ENCODE measurements at regions of chr5 and their contacts with region 1.

Region 1: DNA sequence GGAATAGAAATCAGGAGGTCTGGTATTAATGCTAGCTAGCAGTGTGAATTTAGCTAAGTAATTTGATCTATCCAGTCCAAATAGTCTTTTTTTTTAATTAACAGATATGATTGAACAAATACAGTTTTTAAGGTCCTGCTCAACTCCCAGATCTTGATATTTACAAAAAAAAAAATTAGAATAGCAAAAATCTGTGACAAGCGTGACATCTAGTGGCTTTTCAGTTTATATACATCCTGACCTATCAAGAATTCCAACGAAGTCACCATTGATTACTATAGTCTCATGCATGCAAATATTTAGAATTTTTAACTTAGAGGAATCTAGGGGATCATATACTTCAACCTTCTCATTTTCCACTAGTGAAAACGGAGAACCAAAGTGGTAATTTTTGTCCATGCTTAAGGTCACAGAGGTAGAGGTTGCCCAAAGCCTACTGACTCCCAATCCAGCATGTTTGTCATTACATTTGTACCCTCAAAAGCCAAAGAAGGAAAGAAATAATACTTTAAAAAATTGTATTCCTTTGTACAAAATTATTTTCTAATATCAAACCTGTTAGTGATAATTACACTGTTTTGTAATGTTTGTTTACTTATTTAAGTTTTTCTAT is 17.6 kb upstream of the TARS1 start:
- DNase-seq: peak; percentile 66
- H3K4me3 ChIP-seq: no peak overlapping the region
- H3K27ac ChIP-seq: no peak overlapping the region
- H3K4me1 ChIP-seq: no peaks in the 10 kb centered on the region
- H3K27me3 ChIP-seq: peaks cover 0 to 2% of the 10 kb centered on the region in 2 experiments
- CTCF ChIP-seq: peak; percentile 11 to 17
- POLR2A ChIP-seq: no peak

Region 2: DNA sequence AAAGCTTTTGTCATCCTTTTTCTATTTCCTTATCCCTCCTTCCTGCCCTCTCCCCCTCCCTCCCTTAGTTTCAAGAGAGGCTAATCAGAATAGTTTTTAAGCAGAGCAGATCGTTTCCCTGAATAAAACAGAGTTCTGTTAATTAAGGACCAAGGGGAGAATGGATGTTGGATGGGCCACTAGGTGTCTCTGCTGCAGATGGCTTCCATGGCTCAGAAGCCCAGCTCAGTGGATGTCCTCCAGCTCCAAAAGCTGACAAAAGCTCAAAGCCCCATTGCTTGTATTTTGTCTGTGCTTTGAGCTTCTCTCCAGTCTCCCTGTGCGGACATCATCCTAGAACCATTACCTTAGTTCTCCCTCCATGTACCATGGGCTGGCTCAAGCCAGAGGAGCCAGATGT is 733.0 kb before region 1 on chr5:
- CTCF ChIA-PET with region 1: interaction called, 14 read pairs
- POLR2A ChIA-PET with region 1: no interaction called
- dilution Hi-C with region 1: no loop called
- intact Hi-C with region 1: loop called (anchors 5 kb)
- DNase-seq: no peak
- H3K4me3 ChIP-seq: no peak overlapping the region
- H3K27ac ChIP-seq: no peak overlapping the region
- H3K4me1 ChIP-seq: no peaks in the 10 kb centered on the region
- H3K27me3 ChIP-seq: no peaks in the 10 kb centered on the region
- CTCF ChIP-seq: peak in 1 of 2 donors; percentile 22
- POLR2A ChIP-seq: no peak

Region 3: GRCh38 chr5:32964261-32964660 is 458.9 kb before region 1 on chr5:
- CTCF ChIA-PET with region 1: no interaction called
- POLR2A ChIA-PET with region 1: no interaction called
- dilution Hi-C with region 1: no loop called
- intact Hi-C with region 1: loop called (anchors 10 kb)
- DNase-seq: no peak
- H3K4me3 ChIP-seq: no peak overlapping the region
- H3K27ac ChIP-seq: no peak overlapping the region
- H3K4me1 ChIP-seq: no peaks in the 10 kb centered on the region
- H3K27me3 ChIP-seq: peaks cover 0 to 3% of the 10 kb centered on the region in 2 experiments
- CTCF ChIP-seq: no peak
- POLR2A ChIP-seq: no peak